GM18951 (cell line): ENCODE measurements at regions of chr9 and their contacts with region 1.

Region 1: DNA sequence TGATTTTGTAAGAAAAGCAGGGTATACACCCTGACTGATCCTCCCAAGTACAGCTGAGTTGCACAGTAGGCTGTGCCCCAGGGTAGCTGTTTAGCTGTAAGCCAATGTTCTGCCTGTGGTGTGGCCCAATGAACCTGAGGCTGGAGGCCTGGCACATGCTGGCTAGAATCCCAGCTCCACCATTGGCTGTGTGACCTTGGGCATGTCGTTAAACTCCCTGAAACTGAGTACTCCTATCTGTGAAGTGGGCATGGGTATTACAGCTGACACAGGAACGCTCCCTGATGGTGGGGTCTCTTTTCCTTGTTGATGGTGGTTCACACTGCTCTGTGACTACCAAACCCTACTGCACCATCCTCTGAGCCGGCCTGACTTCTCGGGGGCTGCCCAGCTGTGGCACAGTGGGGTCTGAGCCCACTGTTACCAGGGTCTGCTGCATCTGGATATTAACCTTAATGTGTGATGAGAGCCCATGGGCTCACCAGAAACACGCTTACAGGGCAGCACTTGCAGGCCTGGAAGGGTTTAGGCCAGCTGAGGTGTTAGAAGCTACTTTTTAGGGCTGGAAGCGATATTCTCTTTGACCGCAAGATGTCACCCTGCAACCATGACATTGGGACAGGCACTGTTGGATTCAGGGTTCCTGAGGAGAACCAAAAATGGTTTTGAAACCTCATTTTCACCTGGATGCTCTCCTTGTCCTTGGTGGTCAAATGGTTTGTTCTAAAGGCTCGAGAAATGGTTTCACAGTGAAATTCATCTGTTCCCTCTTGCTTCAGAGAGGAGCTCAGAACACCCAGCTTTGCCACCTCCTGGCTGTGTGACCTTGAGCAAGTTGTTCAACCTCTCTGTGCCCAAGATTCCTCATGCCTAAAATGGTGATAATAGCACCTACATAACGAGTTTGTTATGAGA is 6.8 kb upstream of the GADD45G start:
- POLR2A ChIP-seq: no peak

Region 2: GRCh38 chr9:89059925-89060506 is 538.0 kb before region 1 on chr9:
- in situ Hi-C with region 1: no loop called
- POLR2A ChIP-seq: no peak

Region 3: DNA sequence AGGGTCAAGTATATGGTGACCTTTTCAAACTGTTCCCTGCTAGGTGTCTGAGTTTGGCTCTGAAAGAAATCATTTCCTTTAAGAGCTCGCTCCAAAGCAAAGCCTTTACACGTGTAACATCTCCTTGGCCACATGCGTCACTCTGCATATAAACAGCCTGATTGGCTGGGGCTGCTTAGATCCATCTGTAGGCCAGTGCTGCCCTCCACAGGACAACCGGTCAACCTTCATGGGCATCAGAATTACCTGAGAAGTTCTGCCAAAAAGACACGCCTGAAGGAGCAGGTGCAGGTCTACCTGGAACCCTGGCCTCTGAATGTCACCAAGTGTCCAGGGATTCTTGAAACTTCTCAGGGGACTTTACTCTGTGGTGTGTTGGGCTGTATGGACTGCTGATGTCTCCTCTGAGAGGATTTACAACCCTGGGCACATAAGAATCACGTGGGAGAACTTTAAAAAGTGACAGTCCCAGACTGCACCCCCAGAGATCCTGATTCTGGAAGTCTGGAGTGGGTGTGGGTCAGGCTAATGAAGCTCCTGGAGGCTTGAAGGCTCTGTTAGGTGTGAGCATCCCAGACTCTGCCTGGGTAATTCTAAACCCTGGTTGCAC is 504.4 kb after region 1 on chr9:
- in situ Hi-C with region 1: loop called (anchors 5 kb)
- POLR2A ChIP-seq: no peak